Ovary (tissue), 10 donors: ENCODE measurements at regions of chr1 and their contacts with region 1.

Region 1: DNA sequence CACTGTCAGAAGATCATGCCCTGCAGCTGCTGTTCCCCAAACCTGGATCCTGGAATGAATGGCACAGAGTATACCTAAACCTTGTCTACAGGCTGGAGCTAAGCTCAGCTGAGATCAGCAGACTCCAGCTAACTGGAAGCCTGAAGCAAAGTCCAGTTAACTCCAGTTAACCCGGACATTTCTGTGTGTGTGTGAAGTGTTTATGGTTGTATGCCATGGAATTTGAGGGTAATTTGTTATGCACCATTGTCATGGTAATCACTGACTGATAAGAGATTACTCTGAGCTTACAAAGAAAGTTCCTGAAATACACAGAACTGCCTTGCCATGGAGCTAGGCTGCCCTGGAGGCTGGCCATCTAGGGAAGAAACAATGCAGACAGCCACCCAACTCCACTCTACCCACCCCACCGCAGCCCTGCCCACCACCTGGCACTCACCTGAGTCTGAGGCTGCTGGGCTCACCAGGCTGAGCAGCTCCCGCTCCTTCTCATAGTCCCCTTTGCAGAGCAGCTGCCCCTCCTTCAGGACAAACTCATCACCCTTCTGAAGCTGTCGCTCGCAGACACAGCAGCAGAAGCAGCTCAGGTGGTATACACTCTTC is 107.4 kb downstream of the LMX1A start:
- DNase-seq: no peak
- H3K4me3 ChIP-seq: no peak overlapping the region
- H3K27ac ChIP-seq: no peak overlapping the region
- H3K4me1 ChIP-seq: no peaks in the 10 kb centered on the region
- H3K27me3 ChIP-seq: no peaks in the 10 kb centered on the region
- CTCF ChIP-seq: no peak
- EP300 ChIP-seq: no peak
- POLR2A ChIP-seq: no peak

Region 2: GRCh38 chr1:165129568-165130164 is 119.4 kb before region 1 on chr1:
- intact Hi-C with region 1: no loop called
- DNase-seq: peak in 2 of 5 donors; percentile 18 to 20
- H3K4me3 ChIP-seq: no peak overlapping the region
- H3K27ac ChIP-seq: no peak overlapping the region
- H3K4me1 ChIP-seq: no peaks in the 10 kb centered on the region
- H3K27me3 ChIP-seq: no peaks in the 10 kb centered on the region
- CTCF ChIP-seq: no peak
- EP300 ChIP-seq: no peak
- POLR2A ChIP-seq: no peak

Region 3: GRCh38 chr1:165204548-165204947 is 44.5 kb before region 1 on chr1:
- intact Hi-C with region 1: loop called in 1 of 4 experiments (anchors 2 kb)
- DNase-seq: no peak
- H3K4me3 ChIP-seq: no peak overlapping the region
- H3K27ac ChIP-seq: no peak overlapping the region
- H3K4me1 ChIP-seq: no peaks in the 10 kb centered on the region
- H3K27me3 ChIP-seq: no peaks in the 10 kb centered on the region
- CTCF ChIP-seq: no peak
- EP300 ChIP-seq: no peak
- POLR2A ChIP-seq: no peak